Activated T-helper 1 cell treated with anti-CD3 and anti-CD28 coated beads, Interleukin-12 subunit alpha, Interleukin-12 subunit beta, Interleukin-2, Interleukin-4 antibody, amounts not matched to agents 30 ng/mL and 10 ng/mL and 1 ng/mL, durations not matched to agents 14 hours and 24 hours and 36 hours (primary cell): ENCODE measurements at regions of chr2 and their contacts with region 1.

Region 1: DNA sequence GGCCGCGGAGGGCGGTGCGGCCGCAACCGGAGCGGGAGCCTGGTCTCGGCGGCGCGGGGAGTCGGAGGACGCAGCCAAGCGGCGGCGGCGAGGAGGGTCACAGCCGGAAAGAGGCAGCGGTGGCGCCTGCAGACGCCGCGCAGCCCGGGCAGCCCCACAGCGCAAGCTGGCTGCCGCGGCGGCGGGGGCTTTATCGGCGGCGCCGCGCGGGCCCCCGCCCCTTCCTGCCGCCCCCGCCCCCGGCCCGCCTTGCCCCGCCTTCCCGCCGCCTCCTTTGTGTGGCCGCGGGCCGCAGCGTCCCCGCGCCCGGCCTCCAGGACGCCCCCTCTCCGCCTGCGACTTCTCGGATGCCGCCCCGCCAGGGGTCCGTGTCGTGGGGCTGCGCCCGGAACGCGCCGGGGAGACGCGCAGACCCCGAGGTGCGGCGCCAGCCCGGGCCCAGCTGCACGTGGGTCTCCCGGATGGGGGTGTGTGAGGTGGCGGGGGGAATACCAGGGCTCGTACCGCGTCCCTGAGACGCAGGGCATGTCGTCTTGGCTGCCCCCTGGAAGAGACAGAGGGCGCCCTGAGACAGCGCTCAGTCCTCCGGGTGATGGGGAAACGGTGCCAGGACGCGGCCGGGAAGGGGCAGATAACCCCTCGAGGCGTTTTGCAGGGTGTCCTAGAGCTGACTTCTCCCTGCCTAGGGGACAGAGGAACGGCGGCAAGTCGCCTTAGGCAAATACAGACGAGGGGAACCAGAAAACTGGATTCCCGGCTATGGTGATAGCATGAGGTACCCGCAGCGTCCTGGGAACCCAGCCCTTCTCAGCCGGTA is at the start of gene SERPINE2:
- DNase-seq: peak; percentile 46
- H3K4me3 Mint-ChIP-seq: peak within 1 kb of the TSS; percentile 97
- H3K27ac Mint-ChIP-seq: peak within 1 kb of the TSS; percentile 82
- H3K4me1 Mint-ChIP-seq: peaks cover 25% of the 10 kb centered on the region
- H3K27me3 Mint-ChIP-seq: peaks cover 38% of the 10 kb centered on the region
- total RNA-seq, gene SERPINE2: 28.8 and 29.7 TPM in 2 replicates

Region 2: GRCh38 chr2:222703866-222704265 is 1335.5 kb before region 1 on chr2:
- intact Hi-C with region 1: no loop called
- DNase-seq: no peak
- H3K4me3 Mint-ChIP-seq: no peak overlapping the region
- H3K27ac Mint-ChIP-seq: no peak overlapping the region
- H3K4me1 Mint-ChIP-seq: peaks cover 22% of the 10 kb centered on the region
- H3K27me3 Mint-ChIP-seq: peaks cover 32% of the 10 kb centered on the region

Region 3: DNA sequence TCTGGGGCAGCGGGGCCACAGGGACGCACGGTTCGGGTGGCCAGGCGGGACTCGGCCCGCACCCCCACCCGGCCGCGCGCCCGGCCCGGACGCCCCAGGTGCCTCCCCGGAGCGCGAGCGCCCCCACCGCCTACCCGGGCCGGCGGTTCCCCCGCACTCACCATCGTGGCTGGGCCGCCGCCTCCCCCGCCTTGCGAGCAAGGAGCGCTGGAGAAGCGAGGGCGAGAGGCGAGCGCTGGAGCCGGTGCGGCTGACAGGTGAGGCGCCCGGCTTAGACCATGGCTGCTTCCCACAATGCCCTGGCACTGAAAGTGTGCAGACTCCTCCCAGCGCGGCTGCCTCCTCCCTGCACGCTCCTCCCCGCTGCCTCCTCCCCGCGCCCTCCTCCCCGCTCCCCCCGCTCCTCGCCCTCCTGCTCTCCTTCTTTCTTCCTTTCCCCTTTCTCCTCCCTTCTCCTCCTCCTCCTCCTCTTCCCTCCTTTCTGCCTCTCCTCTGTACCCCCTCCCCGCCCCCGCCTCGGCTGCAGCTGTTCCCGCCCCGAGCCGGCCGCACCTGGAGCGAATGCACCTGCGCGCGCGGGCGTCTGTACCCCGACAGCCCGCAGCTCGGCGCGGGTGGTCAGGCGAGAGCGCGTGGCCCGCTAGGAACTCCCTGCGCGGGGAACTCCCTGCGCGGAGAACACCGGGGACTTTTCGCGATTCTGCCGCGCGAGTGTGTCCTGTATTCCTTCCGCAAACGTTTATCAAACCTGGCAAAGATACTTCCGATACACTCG is 201.9 kb before region 1 on chr2 and contains the start of gene AP1S3:
- intact Hi-C with region 1: loop called (anchors 1 kb)
- DNase-seq: peak; percentile 63
- H3K4me3 Mint-ChIP-seq: peak within 1 kb of the TSS; percentile 92
- H3K27ac Mint-ChIP-seq: peak within 1 kb of the TSS; percentile 76
- H3K4me1 Mint-ChIP-seq: peaks cover 12% of the 10 kb centered on the region
- H3K27me3 Mint-ChIP-seq: peaks cover 7% of the 10 kb centered on the region
- total RNA-seq, gene AP1S3: 11.9 and 14.4 TPM in 2 replicates

Region 4: DNA sequence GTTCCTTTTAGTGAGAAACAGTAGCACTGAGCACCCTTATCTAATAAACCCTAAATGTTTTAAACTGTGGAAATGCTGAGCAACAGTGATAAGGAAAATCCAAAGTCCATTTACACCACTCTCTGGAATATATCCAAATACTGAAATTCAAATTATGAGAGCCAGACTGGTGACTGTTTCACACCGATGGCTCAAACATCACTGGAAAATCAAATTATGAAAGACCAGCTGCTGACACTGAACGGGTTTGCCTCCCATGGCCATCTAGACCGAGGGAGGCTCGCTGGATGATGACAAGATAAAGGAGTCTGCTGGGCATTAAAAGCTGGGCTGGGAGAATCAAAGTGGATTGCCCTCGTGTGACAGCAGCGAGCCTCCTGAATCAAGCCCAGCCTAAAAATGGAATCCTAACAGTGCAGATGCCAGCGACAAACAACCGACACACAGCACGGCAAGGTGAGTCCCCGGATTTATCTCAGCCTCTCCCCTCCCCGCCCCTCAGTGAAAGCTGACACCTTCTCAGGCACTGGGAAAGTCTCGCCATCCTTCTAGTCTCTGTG is 30.6 kb before region 1 on chr2:
- intact Hi-C with region 1: loop called (anchors 2 kb)
- DNase-seq: no peak
- H3K4me3 Mint-ChIP-seq: no peak overlapping the region
- H3K27ac Mint-ChIP-seq: no peak overlapping the region
- H3K4me1 Mint-ChIP-seq: peaks cover 16% of the 10 kb centered on the region
- H3K27me3 Mint-ChIP-seq: no peaks in the 10 kb centered on the region

Region 5: GRCh38 chr2:224025874-224026273 is 13.5 kb before region 1 on chr2:
- intact Hi-C with region 1: loop called (anchors 1 kb)
- DNase-seq: peak; percentile 65
- H3K4me3 Mint-ChIP-seq: peak overlapping the region; percentile 51
- H3K27ac Mint-ChIP-seq: peak overlapping the region; percentile 87
- H3K4me1 Mint-ChIP-seq: peaks cover 77% of the 10 kb centered on the region
- H3K27me3 Mint-ChIP-seq: no peaks in the 10 kb centered on the region

Region 6: DNA sequence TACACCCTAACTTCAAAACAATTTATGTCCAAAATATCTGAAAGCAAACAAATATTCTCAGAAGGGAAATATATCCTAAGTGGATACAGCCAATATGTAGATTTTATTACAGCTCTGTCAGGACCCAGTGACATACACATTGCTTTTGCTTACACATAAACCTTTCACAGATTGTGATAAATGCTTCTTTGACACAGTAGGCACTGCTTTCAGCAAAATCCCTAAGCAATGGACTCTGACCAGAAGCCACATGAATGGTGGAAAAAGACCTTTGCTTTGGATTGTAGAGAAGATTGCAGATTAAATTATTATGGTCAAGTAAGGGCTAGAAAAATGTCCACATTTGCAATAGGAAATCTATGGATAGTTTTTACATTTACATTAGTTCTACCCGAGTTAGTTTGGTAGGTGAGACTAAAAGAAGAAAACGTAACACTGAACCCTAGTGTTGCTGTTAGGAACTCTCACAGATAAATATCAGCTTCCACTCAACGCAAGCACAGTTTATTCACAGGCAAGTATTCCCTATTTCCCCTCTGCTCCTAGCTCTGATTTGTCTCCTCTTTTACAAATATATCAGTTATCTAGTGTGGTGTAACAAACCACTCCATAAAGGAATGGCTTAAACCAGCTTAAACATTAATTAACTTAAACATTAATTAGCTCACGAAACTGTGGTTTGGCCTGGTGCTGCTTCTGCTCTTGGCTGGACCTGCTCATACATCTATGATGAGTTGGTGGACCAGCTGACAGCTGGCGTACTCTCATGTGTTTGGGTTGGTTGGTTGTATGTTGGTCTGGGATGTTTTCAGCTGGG is 23.4 kb after region 1 on chr2:
- intact Hi-C with region 1: no loop called
- DNase-seq: no peak
- H3K4me3 Mint-ChIP-seq: no peak overlapping the region
- H3K27ac Mint-ChIP-seq: no peak overlapping the region
- H3K4me1 Mint-ChIP-seq: no peaks in the 10 kb centered on the region
- H3K27me3 Mint-ChIP-seq: peaks cover 6% of the 10 kb centered on the region

Region 7: DNA sequence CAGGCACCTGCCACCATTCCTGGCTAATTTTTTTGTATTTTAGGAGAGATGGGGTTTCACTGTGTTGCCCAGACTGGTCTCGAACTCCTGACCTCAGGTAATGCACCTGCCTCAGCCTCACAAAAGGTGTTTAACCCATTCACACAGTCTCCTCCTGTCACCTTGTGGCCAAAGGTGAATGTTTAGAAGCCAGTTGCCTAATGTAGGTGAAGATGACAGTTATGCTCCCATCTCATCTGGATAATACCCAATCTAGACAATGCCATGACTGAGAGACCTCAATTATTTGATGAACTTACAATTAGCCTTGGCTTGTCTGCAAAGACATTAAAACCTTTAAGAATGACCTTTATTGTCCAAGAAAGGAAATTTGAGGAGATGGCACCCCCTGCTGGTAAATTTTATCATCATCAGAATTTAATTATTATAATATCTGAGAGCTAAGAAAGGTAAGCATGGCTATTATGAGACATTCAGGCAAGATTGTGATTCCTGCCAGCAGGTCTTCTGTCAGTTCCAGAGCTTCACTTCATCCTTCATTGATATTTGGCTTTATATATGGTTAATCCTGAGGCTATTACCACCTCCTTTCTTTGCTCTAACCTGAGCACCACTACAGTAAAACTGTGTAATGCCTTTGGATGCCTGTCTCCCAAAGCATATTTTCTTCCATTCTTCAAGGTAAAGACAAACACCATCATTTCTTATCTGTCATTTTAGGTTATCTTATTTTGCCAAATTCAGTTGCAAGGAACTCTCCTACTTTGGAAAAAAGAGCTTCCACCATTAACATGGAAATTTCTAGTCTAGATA is 245.0 kb after region 1 on chr2:
- intact Hi-C with region 1: loop called (anchors 5 kb)
- DNase-seq: no peak
- H3K4me3 Mint-ChIP-seq: no peak overlapping the region
- H3K27ac Mint-ChIP-seq: no peak overlapping the region
- H3K4me1 Mint-ChIP-seq: no peaks in the 10 kb centered on the region
- H3K27me3 Mint-ChIP-seq: peaks cover 21% of the 10 kb centered on the region

Region 8: GRCh38 chr2:224308272-224308911 is 269.1 kb after region 1 on chr2:
- intact Hi-C with region 1: no loop called
- DNase-seq: no peak
- H3K4me3 Mint-ChIP-seq: no peak overlapping the region
- H3K27ac Mint-ChIP-seq: no peak overlapping the region
- H3K4me1 Mint-ChIP-seq: no peaks in the 10 kb centered on the region
- H3K27me3 Mint-ChIP-seq: peaks cover 8% of the 10 kb centered on the region